Heart right ventricle (tissue), 16 donors: ENCODE measurements at regions of chr1 and their contacts with region 1.

Region 1: DNA sequence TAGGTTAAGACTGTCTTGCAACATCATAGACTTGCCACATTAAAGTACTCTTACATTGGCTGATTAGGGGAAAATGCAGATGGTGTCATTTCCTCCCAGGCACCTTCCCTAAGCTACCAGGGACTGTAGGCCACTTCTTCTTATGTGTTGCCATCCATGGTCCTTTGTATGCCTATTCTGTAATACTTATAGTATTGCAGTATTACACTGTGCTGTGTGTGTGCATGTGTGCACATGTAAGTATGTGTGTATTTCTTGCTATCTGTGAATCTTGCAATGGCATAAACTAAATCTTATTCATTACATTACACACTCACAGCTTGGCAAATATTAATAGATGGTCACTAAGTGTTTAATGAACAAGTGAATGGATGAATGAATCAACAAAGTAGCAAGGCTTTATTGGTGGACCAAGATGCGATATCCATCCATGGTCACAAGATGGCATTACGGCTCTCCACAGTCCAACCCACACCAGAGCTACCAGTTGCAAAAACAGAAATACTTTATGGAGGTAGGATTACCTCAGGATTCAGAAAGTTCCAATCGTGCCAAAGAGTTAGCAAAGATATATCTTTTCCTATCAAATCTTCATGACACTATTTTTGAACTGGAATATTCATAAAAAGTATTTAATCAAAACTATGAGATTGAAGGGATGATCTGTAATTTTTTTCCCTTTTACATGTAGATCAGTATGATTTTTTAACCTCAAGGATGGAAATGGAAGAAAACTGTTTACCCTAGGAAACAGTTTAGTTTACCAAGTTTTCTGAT is 160.2 kb downstream of the DENND1B start:
- DNase-seq: no peak
- ATAC-seq: peak in 6 of 8 donors; percentile 43 to 81 (median 55)
- H3K4me3 ChIP-seq: no peak overlapping the region
- H3K27ac ChIP-seq: no peak overlapping the region
- H3K4me1 ChIP-seq: peaks cover 0 to 23% (median 10%) of the 10 kb centered on the region in 9 donors
- H3K27me3 ChIP-seq: no peaks in the 10 kb centered on the region
- CTCF ChIP-seq: peak in 8 of 9 donors; percentile 19 to 72 (median 62)

Region 2: GRCh38 chr1:197577580-197577979 is 37.5 kb before region 1 on chr1:
- intact Hi-C with region 1: no loop called
- DNase-seq: no peak
- ATAC-seq: no peak
- H3K4me3 ChIP-seq: no peak overlapping the region
- H3K27ac ChIP-seq: no peak overlapping the region
- H3K4me1 ChIP-seq: no peaks in the 10 kb centered on the region
- H3K27me3 ChIP-seq: no peaks in the 10 kb centered on the region
- CTCF ChIP-seq: no peak

Region 3: GRCh38 chr1:197595304-197595904 is 19.7 kb before region 1 on chr1:
- intact Hi-C with region 1: no loop called
- DNase-seq: no peak
- ATAC-seq: peak in 1 of 8 donors; percentile 16
- H3K4me3 ChIP-seq: no peak overlapping the region
- H3K27ac ChIP-seq: no peak overlapping the region
- H3K4me1 ChIP-seq: no peaks in the 10 kb centered on the region
- H3K27me3 ChIP-seq: no peaks in the 10 kb centered on the region
- CTCF ChIP-seq: no peak

Region 4: DNA sequence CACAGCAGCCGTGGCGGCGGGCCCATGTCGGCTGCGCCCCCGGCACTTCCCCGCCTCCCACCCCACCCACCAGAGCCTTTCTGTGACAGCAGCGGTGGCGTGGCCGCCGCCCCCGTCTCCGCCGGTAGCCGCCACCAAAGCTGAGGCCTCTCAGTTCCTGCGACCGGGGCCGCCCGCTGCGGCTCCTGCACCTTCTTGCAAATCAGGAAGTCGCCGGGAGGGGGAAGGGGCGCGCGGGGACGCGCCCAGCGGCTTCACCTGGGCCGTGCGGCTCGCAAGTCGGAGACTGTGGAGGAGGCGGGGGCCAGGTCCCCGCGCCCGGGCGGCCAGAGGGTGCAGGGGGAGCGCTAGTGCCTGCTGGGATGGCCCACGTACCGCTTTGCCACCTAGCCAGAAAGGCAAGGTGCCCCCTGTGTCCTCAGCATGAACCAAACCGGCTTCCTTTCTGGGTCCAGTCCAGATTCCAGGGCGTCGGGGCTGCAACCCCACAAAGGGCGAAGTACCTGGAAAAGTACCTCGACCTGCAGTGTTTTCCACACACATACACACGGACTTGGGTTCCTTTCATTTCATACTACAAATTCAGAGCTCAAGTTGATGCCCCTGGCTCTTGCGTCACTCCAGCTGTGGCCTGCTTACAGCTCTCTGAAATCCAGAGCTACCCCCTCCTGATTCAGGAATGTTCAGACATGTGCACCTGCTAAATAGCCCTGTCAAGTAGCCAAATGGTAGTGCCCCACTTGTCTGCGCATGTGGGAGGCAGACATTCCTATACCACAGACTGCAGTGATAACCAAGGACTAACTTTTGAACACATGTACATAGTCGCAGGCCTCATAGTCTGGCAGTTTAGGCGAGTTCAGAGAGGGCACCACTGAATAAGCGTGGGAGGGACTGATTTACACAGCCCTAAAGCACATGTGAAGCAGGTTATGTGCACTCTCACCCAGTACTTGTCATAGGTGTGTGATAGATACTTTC is 160.5 kb after region 1 on chr1 and contains the start of gene DENND1B:
- intact Hi-C with region 1: loop called in 3 of 10 experiments (anchors 5 to 10 kb)
- DNase-seq: peak; percentile 60 to 77
- ATAC-seq: peak; percentile 72 to 91 (median 80)
- H3K4me3 ChIP-seq: peak within 1 kb of the TSS; percentile 66 to 90 (median 78)
- H3K27ac ChIP-seq: peak within 1 kb of the TSS; percentile 82 to 96 (median 92)
- H3K4me1 ChIP-seq: peaks cover 0 to 67% (median 39%) of the 10 kb centered on the region in 9 donors
- H3K27me3 ChIP-seq: no peaks in the 10 kb centered on the region
- CTCF ChIP-seq: peak in 2 of 9 donors; percentile 4 to 8
- total RNA-seq, gene DENND1B: 21.1 to 36.3 (median 23.8) TPM

Region 5: GRCh38 chr1:197868751-197869489 is 253.8 kb after region 1 on chr1:
- intact Hi-C with region 1: loop called in 9 of 10 experiments (anchors 2 to 5 kb)
- DNase-seq: peak in 1 of 2 donors; percentile 30
- ATAC-seq: peak in 6 of 8 donors; percentile 71 to 92 (median 82)
- H3K4me3 ChIP-seq: no peak overlapping the region
- H3K27ac ChIP-seq: no peak overlapping the region
- H3K4me1 ChIP-seq: no peaks in the 10 kb centered on the region
- H3K27me3 ChIP-seq: peaks cover 0 to 4% (median 0%) of the 10 kb centered on the region in 7 donors
- CTCF ChIP-seq: peak; percentile 13 to 77 (median 65)

Region 6: DNA sequence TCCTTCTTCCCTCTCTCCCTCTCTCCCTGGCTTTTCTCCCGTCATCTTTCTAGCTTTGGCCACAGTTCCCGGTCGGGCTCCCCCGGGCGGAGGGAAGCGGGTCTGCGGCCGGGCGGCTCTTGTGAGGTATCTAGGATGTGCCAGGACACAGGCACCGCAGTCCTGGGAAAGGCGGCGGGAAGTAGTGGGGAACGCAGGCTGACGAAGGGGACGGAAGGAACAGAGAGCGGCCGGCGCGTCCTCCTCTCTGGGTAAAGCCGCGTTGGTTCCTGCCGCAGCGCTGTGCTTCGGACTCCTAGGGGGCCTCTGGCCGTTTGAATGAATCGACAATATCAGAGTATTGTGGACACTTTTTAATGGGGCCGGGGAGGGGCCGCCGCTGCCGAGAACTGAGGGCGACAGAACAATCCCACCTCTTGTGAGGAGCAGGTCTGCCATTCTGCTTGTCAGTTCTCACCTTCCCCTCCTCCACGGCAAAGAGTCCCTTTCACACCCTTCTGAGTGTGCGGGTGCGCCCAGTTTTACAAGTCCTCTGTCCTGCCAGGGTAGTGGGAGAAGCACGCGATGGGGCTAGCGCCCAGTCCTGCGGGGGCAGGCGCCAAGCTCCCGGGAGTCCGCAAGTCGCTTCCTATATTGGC is 300.9 kb after region 1 on chr1:
- intact Hi-C with region 1: loop called in 7 of 10 experiments (anchors 5 kb)
- DNase-seq: peak; percentile 25 to 60
- ATAC-seq: peak; percentile 26 to 72 (median 56)
- H3K4me3 ChIP-seq: peak overlapping the region in 9 of 10 donors; percentile 3 to 54 (median 40)
- H3K27ac ChIP-seq: no peak overlapping the region
- H3K4me1 ChIP-seq: peaks cover 12 to 93% (median 60%) of the 10 kb centered on the region in 9 donors
- H3K27me3 ChIP-seq: peaks cover 63 to 100% (median 100%) of the 10 kb centered on the region in 7 donors
- CTCF ChIP-seq: peak in 8 of 9 donors; percentile 5 to 58 (median 44)

Region 7: GRCh38 chr1:197924516-197925123 is 309.5 kb after region 1 on chr1:
- intact Hi-C with region 1: loop called in 8 of 10 experiments (anchors 2 to 5 kb)
- DNase-seq: peak in 1 of 2 donors; percentile 27
- ATAC-seq: peak in 3 of 8 donors; percentile 57 to 73 (median 67)
- H3K4me3 ChIP-seq: no peak overlapping the region
- H3K27ac ChIP-seq: no peak overlapping the region
- H3K4me1 ChIP-seq: peaks cover 0 to 19% (median 4%) of the 10 kb centered on the region in 9 donors
- H3K27me3 ChIP-seq: peaks cover 14 to 99% (median 85%) of the 10 kb centered on the region in 7 donors
- CTCF ChIP-seq: peak; percentile 35 to 82 (median 73)